ENCODE measurements at regions of chr15 and their contacts with region 1.

Region 1: GRCh38 chr15:58889363-58889762 is 44.1 kb downstream of the SLTM start:
- H3K4me3 Mint-ChIP-seq: no peak overlapping the region
- H3K27ac Mint-ChIP-seq: no peak overlapping the region
- H3K4me1 Mint-ChIP-seq: peaks cover 10% of the 10 kb centered on the region
- H3K27me3 Mint-ChIP-seq: no peaks in the 10 kb centered on the region

Region 2: GRCh38 chr15:58227706-58228543 is 661.4 kb before region 1 on chr15:
- intact Hi-C with region 1: loop called (anchors 5 kb)
- H3K4me3 Mint-ChIP-seq: no peak overlapping the region
- H3K27ac Mint-ChIP-seq: no peak overlapping the region
- H3K4me1 Mint-ChIP-seq: peaks cover 19% of the 10 kb centered on the region
- H3K27me3 Mint-ChIP-seq: no peaks in the 10 kb centered on the region

Measured in dendritic cell treated with granulocyte-macrophage colony-stimulating factor and Interleukin-4, amounts not matched to agents 40 ng/mL and 50 ng/mL, for 4 days (primary cell).